Naive thymus-derived CD8-positive, alpha-beta T cell (primary cell): ENCODE measurements at regions of chr19 and their contacts with region 1.

Region 1: DNA sequence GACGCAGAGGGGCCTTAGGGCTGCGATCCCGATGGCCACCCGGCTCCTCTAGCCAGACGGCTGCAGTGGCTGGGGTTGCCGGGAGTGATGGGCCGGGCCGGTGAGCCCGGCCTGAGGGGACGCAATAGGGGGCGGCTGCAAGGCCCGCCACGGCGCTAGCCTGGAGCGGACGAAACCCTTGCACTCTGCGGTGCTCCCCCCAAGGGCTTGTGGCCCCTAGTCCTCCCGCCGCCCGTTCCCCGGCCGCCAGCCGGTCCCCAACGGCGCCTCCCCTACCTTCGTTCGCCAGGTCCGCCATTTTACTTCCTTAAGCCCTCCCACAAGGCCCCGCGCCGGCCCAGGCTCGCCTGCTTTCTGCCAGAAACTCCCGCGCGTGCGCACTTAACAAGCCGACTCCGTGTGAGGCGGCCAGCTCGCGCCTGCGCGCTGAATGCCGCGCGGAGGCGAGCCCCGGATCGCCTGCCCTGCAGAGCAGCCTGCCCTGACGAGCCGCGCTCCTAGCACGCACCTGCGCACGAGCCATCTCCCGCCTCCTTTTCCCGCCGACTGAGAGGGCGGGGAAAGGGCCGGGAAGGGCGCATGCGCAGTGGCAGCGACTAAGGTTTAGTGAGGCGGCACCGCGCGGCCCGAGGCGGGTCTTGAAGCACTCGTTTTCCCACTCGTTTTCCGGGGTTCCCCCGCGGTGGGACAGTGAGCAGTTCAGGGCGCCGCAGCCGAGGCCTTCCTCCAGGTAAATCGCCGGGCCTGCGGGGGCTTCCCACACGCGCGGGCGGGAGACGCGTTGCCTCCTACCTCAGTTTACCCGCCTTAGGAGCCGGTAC is at the start of gene RANBP3:
- DNase-seq: peak; percentile 93 to 99 (median 99)
- ATAC-seq: peak; percentile 84 to 85
- H3K4me3 Mint-ChIP-seq: peak within 1 kb of the TSS; percentile 92 to 99 (median 96)
- H3K27ac Mint-ChIP-seq: peak within 1 kb of the TSS; percentile 86 to 99 (median 96)
- H3K4me1 Mint-ChIP-seq: peaks cover 30 to 60% (median 53%) of the 10 kb centered on the region in 4 donors
- H3K27me3 Mint-ChIP-seq: peaks cover 0 to 3% (median 0%) of the 10 kb centered on the region in 5 donors
- polyA plus RNA-seq, gene RANBP3: 7.7 to 13.0 (median 9.1) TPM

Region 2: GRCh38 chr19:5891938-5892771 is 85.8 kb before region 1 on chr19:
- POLR2A ChIA-PET with region 1: no interaction called
- DNase-seq: peak in 1 of 10 donors; percentile 17
- ATAC-seq: peak; percentile 51 to 60
- H3K4me3 Mint-ChIP-seq: no peak overlapping the region
- H3K27ac Mint-ChIP-seq: peak overlapping the region in 3 of 10 donors; percentile 25 to 88 (median 52)
- H3K4me1 Mint-ChIP-seq: peaks cover 0 to 7% (median 4%) of the 10 kb centered on the region in 4 donors
- H3K27me3 Mint-ChIP-seq: peaks cover 1 to 20% (median 6%) of the 10 kb centered on the region in 5 donors

Region 3: GRCh38 chr19:5961969-5962945 is 15.7 kb before region 1 on chr19:
- POLR2A ChIA-PET with region 1: interaction called, 90 read pairs
- DNase-seq: peak; percentile 58 to 90 (median 77)
- ATAC-seq: peak; percentile 91 to 96
- H3K4me3 Mint-ChIP-seq: peak overlapping the region; percentile 71 to 92 (median 88)
- H3K27ac Mint-ChIP-seq: peak overlapping the region; percentile 95 to 100 (median 100)
- H3K4me1 Mint-ChIP-seq: peaks cover 46 to 98% (median 96%) of the 10 kb centered on the region in 4 donors
- H3K27me3 Mint-ChIP-seq: no peaks in the 10 kb centered on the region